Left lung (tissue), 14 donors: ENCODE measurements at regions of chr7 and their contacts with region 1.

Region 1: GRCh38 chr7:121994625-121995410 is 121.9 kb downstream of the PTPRZ1 start:
- DNase-seq: peak in 3 of 4 donors; percentile 40 to 77 (median 60)
- ATAC-seq: peak; percentile 99
- H3K4me3 ChIP-seq: no peak overlapping the region
- H3K27ac ChIP-seq: no peak overlapping the region
- H3K4me1 ChIP-seq: no peaks in the 10 kb centered on the region
- H3K27me3 ChIP-seq: no peaks in the 10 kb centered on the region
- CTCF ChIP-seq: peak; percentile 50 to 62

Region 2: GRCh38 chr7:121752706-121753105 is 242.1 kb before region 1 on chr7:
- intact Hi-C with region 1: loop called in 1 of 2 experiments (anchors 10 kb)
- DNase-seq: peak in 1 of 4 donors; percentile 14
- ATAC-seq: no peak
- H3K4me3 ChIP-seq: no peak overlapping the region
- H3K27ac ChIP-seq: no peak overlapping the region
- H3K4me1 ChIP-seq: no peaks in the 10 kb centered on the region
- H3K27me3 ChIP-seq: no peaks in the 10 kb centered on the region
- CTCF ChIP-seq: no peak

Region 3: GRCh38 chr7:122155566-122155965 is 160.7 kb after region 1 on chr7:
- intact Hi-C with region 1: no loop called
- DNase-seq: no peak
- ATAC-seq: no peak
- H3K4me3 ChIP-seq: no peak overlapping the region
- H3K27ac ChIP-seq: no peak overlapping the region
- H3K4me1 ChIP-seq: no peaks in the 10 kb centered on the region
- H3K27me3 ChIP-seq: no peaks in the 10 kb centered on the region
- CTCF ChIP-seq: no peak